ENCODE measurements at regions of chr3 and their contacts with region 1.

Region 1: DNA sequence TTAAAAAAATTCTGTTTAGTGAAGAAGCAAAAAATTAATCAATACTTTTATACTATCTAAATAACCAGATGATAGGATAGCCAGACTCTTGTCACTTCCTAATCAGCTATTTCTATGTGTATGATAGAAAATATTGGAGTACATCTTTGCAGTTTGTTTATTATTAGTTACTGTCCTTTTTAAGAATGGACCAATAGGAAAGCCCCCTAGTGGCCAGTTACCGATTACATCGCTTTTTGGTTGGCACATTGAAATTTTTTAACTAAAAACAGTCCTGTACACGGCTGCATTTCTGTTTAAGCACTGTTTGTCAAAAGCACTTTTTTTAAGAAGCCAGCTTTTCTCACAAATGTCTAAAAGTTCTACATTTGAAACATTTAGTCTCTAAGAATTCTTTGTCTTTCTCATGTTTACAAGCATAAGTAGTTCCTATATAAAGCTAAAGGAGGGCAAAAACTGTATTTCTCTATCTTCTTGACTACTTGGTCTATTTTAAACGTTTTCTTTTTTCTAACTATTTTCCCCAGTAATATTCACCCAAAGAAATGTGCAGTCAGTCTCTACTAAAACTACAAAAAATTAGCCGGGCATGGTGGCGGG is 253.2 kb upstream of the LRTM1 start:
- DNase-seq: peak in 1 of 5 donors; percentile 16
- ATAC-seq: no peak
- H3K4me3 ChIP-seq: no peak overlapping the region
- H3K27ac ChIP-seq: no peak overlapping the region
- H3K4me1 ChIP-seq: no peaks in the 10 kb centered on the region
- H3K27me3 ChIP-seq: peaks cover 0 to 15% (median 3%) of the 10 kb centered on the region in 9 donors
- CTCF ChIP-seq: peak; percentile 62 to 83 (median 75)
- POLR2A ChIP-seq: no peak

Region 2: DNA sequence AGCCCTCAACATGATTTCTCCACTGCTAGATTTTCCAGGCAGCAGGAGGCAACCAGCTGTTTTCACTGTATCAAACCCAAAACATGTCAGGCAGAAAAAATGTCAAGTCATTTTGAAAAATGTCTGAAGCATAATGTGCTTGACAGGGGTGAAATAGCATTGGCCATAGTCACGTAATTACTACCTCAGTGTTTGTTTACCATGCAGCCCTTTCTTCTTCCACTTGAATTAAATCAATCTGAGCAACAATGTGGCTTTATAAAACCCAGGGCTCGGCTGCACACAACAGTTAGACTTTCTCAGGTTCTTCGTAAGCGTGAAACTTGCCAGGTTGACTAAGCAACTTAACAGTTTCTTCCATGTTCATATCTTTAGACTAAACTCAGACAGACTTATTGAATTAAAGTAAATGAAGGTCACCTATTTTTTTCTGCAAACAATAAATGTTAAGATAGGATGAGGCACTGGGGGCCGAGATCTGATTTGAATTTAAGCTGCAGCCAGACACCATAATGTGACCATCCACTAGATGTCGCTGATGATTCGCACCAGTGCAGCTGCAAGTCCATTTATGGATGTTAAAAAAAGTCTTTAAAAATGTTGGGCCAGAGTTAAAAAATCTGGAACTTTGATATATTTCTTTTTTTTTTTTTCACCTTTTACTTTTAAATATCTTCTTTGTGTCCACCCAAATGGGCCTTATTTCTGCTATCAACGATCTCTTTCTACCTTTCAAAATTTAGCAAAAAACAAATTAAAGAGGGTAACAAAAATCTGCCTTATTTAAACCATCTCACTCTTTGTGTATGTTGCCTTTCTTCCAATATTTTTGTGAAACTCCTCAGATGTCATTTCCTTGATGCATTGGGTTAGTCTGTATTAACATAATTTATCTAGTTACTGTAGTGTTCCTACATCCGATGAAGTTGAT is 752.8 kb before region 1 on chr3:
- intact Hi-C with region 1: loop called in 4 of 10 experiments (anchors 5 to 10 kb)
- DNase-seq: peak in 4 of 5 donors; percentile 32 to 44 (median 39)
- ATAC-seq: peak in 1 of 4 donors; percentile 52
- H3K4me3 ChIP-seq: peak overlapping the region in 1 of 12 donors; percentile 17
- H3K27ac ChIP-seq: no peak overlapping the region
- H3K4me1 ChIP-seq: peaks cover 0 to 6% (median 0%) of the 10 kb centered on the region in 12 donors
- H3K27me3 ChIP-seq: peaks cover 0 to 2% (median 0%) of the 10 kb centered on the region in 9 donors
- CTCF ChIP-seq: peak; percentile 68 to 89 (median 76)
- POLR2A ChIP-seq: no peak

Region 3: DNA sequence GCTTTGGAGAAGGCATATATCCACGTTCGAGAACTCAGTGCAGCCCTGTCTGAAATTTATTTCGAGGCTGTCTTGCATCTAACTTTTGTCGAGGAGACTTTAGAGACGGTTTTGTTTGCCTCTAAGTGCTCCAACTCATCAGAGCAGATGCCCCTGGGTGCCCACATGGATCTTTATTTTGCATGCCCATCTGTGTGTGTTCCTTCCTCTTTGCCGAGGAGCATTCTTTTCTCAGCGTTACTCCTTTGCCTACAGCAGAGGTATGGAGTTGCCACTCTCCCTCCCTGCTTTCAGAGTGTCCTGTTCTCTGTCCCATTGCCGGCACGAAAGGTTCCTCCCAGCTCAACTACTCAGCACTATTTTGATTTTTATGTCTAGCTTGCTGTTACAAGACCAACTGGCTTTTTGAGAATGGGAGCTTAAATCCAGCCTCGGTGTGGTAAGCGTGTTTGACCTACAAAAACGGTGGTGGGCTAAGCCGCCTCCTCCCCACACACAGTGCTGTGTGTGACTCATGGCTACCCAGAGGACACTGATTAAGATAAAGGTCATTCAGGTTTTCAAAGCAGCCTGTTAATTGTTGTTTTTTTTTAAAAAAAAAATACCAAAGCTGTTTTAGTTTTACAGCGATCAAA is 317.8 kb before region 1 on chr3:
- intact Hi-C with region 1: loop called in 4 of 10 experiments (anchors 5 to 10 kb)
- DNase-seq: no peak
- ATAC-seq: peak in 2 of 4 donors; percentile 28 to 68
- H3K4me3 ChIP-seq: no peak overlapping the region
- H3K27ac ChIP-seq: no peak overlapping the region
- H3K4me1 ChIP-seq: peaks cover 0 to 38% (median 3%) of the 10 kb centered on the region in 12 donors
- H3K27me3 ChIP-seq: no peaks in the 10 kb centered on the region
- CTCF ChIP-seq: no peak
- POLR2A ChIP-seq: no peak

Region 4: DNA sequence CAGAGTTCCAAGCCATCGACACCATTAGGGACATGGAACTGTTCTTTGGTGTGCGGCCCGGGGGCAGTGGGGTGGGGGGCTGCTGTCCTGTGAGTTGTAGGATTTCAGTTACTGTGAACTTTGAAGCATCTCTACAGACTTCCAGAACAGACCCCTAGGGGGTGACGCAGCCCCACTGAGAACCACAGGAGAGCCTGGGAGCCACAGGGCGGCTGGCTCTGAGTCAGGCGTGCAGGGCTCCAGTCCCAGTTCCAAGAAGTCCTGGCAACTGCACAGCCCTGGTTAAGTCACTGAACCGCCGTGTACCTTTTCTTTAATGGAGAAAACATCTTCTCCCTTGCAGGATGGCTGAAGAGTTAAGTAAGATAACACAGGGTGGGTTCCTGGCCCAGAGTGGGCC is 229.6 kb before region 1 on chr3:
- intact Hi-C with region 1: loop called in 6 of 10 experiments (anchors 5 to 10 kb)
- DNase-seq: peak; percentile 70 to 87 (median 84)
- ATAC-seq: peak; percentile 93 to 100 (median 98)
- H3K4me3 ChIP-seq: no peak overlapping the region
- H3K27ac ChIP-seq: no peak overlapping the region
- H3K4me1 ChIP-seq: peaks cover 0 to 16% (median 2%) of the 10 kb centered on the region in 12 donors
- H3K27me3 ChIP-seq: no peaks in the 10 kb centered on the region
- CTCF ChIP-seq: peak; percentile 47 to 71 (median 60)
- POLR2A ChIP-seq: no peak

Region 5: GRCh38 chr3:55357796-55358195 is 176.8 kb after region 1 on chr3:
- intact Hi-C with region 1: no loop called
- DNase-seq: no peak
- ATAC-seq: no peak
- H3K4me3 ChIP-seq: no peak overlapping the region
- H3K27ac ChIP-seq: no peak overlapping the region
- H3K4me1 ChIP-seq: no peaks in the 10 kb centered on the region
- H3K27me3 ChIP-seq: no peaks in the 10 kb centered on the region
- CTCF ChIP-seq: no peak
- POLR2A ChIP-seq: no peak

Measured in heart left ventricle (tissue), 16 donors.